ENCODE measurements at regions of chr7 and their contacts with region 1.

Region 1: GRCh38 chr7:97179454-97180104 is 62.1 kb downstream of the SDHAF3 start:
- DNase-seq: peak; percentile 39
- ATAC-seq: peak; percentile 27 to 55

Region 2: GRCh38 chr7:97078023-97078969 is 101.3 kb before region 1 on chr7:
- intact Hi-C with region 1: no loop called
- DNase-seq: no peak
- ATAC-seq: no peak

Region 3: GRCh38 chr7:97104719-97105238 is 74.8 kb before region 1 on chr7:
- intact Hi-C with region 1: loop called (anchors 1 to 5 kb)
- DNase-seq: peak; percentile 85
- ATAC-seq: peak; percentile 94 to 95

Region 4: GRCh38 chr7:97499204-97499603 is 319.6 kb after region 1 on chr7:
- intact Hi-C with region 1: no loop called
- DNase-seq: no peak
- ATAC-seq: no peak

Region 5: DNA sequence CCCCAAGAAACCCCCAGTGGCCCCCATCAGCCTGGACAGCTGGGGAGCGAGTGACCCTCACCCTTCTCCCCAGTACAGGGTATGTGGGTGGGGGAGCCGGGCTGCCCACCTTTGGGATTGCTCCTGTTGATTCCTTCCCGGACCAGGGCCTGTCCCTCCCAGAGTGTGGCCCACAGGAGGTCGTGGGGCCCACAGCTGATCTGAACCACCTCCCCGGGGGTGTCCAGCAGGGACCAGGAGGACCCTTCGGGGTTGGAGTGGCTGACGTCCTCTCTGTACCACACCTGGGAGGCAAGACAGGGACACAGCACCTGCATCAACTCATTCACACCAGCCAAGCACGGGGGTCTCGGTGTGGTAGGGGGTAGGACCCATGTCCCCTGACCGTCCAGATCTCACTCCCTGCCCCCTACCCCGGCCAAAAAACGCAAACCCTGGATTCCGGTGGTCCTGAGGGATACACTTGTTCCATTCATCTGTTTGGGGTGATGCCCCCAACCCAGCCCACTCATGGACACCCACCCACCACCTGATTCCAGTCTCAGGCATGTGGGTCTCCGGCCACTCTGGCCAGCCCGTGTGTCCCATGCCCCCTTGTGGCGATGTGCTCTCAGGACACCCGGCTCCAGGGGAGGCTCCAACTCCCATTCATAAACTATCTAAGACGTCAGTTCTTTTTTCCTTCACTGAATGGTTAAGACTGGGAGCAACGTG is 1061.5 kb after region 1 on chr7:
- intact Hi-C with region 1: no loop called
- DNase-seq: no peak
- ATAC-seq: peak; percentile 46 to 70

Measured in left cardiac atrium (tissue), 4 donors.